ENCODE measurements at regions of chr11 and their contacts with region 1.

Region 1: DNA sequence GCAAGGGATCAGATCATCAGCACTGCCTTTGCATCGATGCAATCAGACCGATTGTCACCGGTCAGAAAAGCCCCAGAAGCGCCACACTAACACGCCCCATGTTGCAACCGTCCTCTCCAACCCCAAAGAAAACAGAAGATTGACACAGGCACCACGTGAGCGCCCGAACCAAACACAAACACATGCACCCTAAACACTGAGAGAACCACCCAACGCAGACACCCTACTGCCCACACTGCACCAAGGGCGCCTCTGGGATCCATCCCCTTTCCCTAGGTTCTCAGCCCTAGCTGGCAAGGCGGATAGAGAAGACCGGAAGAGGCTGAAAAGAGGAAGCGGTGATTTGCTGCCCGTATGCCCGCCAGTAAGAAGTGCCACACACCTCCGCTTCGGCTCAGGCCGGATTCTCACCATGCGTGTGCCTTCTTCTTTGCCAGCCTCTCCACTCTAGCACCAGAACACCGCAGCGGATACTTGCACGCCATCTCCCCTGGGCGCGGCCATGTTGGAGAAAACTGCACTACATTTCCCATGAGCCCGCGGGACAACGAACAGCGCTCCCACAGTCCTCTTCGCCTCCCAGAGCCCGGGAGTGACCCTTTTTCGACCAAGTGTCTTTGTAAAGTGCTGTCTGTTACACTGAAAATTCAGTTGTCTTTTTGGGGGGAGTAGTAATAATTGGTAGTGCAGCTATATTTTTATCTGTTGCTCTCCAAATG is at the start of gene ALKBH8:
- DNase-seq: peak; percentile 71 to 83 (median 72)
- ATAC-seq: peak; percentile 96
- H3K4me3 ChIP-seq: peak within 1 kb of the TSS; percentile 74
- H3K27ac ChIP-seq: peak within 1 kb of the TSS; percentile 86
- H3K4me1 ChIP-seq: peaks cover 9 to 25% of the 10 kb centered on the region in 2 experiments
- H3K27me3 ChIP-seq: no peaks in the 10 kb centered on the region
- CTCF ChIP-seq: no peak
- EP300 ChIP-seq: no peak
- POLR2A ChIP-seq: peak; percentile 76
- RAD21 ChIP-seq: no peak
- polyA plus RNA-seq, gene ALKBH8: 4.3 to 7.5 TPM

Region 2: DNA sequence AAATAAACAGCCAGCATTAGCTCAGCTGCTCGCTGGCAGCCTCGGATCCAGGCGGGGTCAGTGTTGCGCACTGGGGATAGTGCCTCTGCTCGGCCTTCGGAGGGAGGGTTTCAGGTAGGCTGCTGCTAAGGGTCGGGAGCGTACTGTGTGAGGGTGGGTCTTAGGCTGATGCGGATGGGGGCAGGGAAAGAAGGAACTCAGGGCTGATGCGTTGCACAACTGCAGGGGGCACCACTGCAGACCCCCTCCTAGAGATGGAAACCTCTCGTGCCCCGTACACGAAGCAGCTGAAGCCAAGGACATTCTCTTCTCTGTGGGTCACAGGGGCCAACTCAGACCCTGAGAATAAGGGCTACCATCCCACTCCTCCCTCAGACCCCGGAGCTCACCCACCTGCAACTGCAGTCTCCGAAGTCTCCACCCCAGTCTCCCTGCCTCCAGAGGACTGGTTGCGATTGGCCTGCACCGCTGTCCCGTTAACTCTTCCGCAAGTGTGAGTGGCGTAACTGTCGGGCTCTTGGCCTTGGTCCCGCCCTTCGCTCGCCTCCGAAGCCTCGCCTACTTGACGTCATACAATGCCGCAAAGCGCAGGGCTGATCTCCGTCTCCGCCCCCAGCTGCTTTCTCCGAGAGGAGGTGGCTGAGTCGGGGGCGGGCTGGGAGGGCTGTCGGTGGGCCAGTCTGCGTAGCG is 1488.3 kb before region 1 on chr11 and contains the start of gene KBTBD3:
- CTCF ChIA-PET with region 1: no interaction called
- POLR2A ChIA-PET with region 1: no interaction called
- in situ Hi-C with region 1: no loop called
- intact Hi-C with region 1: loop called (anchors 1 kb)
- DNase-seq: peak; percentile 89 to 99 (median 90)
- ATAC-seq: peak; percentile 95
- H3K4me3 ChIP-seq: peak within 1 kb of the TSS; percentile 92
- H3K27ac ChIP-seq: peak within 1 kb of the TSS; percentile 98
- H3K4me1 ChIP-seq: peaks cover 0 to 9% of the 10 kb centered on the region in 2 experiments; a peak in 2 of 5 replicates
- H3K27me3 ChIP-seq: no peaks in the 10 kb centered on the region
- CTCF ChIP-seq: peak; percentile 39 to 67 (median 61); a peak in 5 of 6 replicates
- EP300 ChIP-seq: no peak
- POLR2A ChIP-seq: no peak
- RAD21 ChIP-seq: no peak
- polyA plus RNA-seq, gene KBTBD3: 28.2 to 31.2 TPM

Region 3: GRCh38 chr11:107689317-107690202 is 124.2 kb after region 1 on chr11:
- CTCF ChIA-PET with region 1: interaction called, 26 read pairs
- POLR2A ChIA-PET with region 1: interaction called, 3 read pairs
- in situ Hi-C with region 1: no loop called
- intact Hi-C with region 1: loop called (anchors 1 kb)
- DNase-seq: peak; percentile 33 to 78 (median 46)
- ATAC-seq: peak; percentile 94
- H3K4me3 ChIP-seq: no peak overlapping the region
- H3K27ac ChIP-seq: no peak overlapping the region
- H3K4me1 ChIP-seq: no peaks in the 10 kb centered on the region
- H3K27me3 ChIP-seq: no peaks in the 10 kb centered on the region
- CTCF ChIP-seq: peak; percentile 64 to 86 (median 79)
- EP300 ChIP-seq: no peak
- POLR2A ChIP-seq: no peak
- RAD21 ChIP-seq: peak; percentile 93 to 95

Region 4: GRCh38 chr11:107770551-107770951 is 205.2 kb after region 1 on chr11:
- CTCF ChIA-PET with region 1: interaction called, 4 read pairs
- POLR2A ChIA-PET with region 1: no interaction called
- in situ Hi-C with region 1: no loop called
- intact Hi-C with region 1: loop called (anchors 5 kb)
- DNase-seq: no peak
- ATAC-seq: no peak
- H3K4me3 ChIP-seq: no peak overlapping the region
- H3K27ac ChIP-seq: no peak overlapping the region
- H3K4me1 ChIP-seq: no peaks in the 10 kb centered on the region; a peak in 1 of 5 replicates
- H3K27me3 ChIP-seq: peaks cover 0 to 14% of the 10 kb centered on the region in 2 experiments; a peak in 2 of 5 replicates
- CTCF ChIP-seq: no peak
- EP300 ChIP-seq: no peak
- POLR2A ChIP-seq: no peak
- RAD21 ChIP-seq: no peak

Region 5: DNA sequence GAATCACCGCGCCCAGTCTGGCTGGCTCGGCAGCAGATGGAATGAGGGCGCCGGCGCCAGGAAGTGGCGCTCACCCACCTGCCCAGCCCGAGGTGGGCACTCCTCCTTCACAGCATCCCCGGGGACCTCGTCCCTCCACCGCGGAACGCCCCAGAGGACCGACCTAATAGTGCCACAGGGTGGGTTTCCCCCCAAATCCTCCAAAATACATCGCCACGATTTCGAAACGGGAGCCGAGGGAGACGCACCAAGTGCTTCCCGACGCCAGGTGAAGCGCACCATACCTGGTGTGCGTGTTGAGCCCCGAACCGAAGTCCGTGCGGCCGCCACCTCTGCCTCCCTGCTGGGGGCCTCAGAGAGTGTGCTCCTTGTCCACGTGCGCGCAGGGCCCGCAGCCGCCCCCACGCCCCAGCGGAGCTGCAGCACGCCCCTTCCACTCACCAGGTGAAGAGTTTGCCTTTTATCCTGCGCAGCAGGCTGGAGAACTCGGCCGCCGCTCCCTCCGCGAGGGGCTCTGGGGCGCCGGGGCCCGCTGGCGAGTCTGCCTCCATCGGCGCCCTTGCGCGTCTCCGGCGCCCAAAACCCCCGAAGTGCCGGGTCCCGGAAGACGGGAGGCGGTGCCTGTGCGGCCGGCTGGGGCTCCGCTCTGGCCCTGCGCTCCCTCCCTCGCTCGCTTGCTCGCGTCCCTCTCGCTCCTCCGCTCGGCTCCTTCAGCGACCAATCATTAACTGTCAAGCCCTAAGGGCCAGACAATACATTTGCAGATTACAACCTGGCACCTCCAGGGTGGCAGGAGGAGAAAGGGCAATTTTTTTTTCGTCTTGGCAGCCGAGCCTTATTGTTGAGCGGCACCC is 293.1 kb after region 1 on chr11 and contains the start of gene SLC35F2:
- CTCF ChIA-PET with region 1: no interaction called
- POLR2A ChIA-PET with region 1: interaction called, 5 read pairs
- in situ Hi-C with region 1: no loop called
- intact Hi-C with region 1: loop called (anchors 5 kb)
- DNase-seq: peak; percentile 72 to 86 (median 78)
- ATAC-seq: peak; percentile 92
- H3K4me3 ChIP-seq: peak within 1 kb of the TSS; percentile 77
- H3K27ac ChIP-seq: peak within 1 kb of the TSS; percentile 58
- H3K4me1 ChIP-seq: peaks cover 6 to 17% of the 10 kb centered on the region in 2 experiments; a peak in 3 of 5 replicates
- H3K27me3 ChIP-seq: no peaks in the 10 kb centered on the region; a peak in 1 of 5 replicates
- CTCF ChIP-seq: peak; percentile 4 to 12 (median 9); a peak in 1 of 6 replicates
- EP300 ChIP-seq: 0 out of 2 replicates have a peak, but pooled peaks have one; percentile 5
- POLR2A ChIP-seq: peak; percentile 85
- RAD21 ChIP-seq: no peak
- polyA plus RNA-seq, gene SLC35F2: 28.6 to 38.3 TPM

Region 6: DNA sequence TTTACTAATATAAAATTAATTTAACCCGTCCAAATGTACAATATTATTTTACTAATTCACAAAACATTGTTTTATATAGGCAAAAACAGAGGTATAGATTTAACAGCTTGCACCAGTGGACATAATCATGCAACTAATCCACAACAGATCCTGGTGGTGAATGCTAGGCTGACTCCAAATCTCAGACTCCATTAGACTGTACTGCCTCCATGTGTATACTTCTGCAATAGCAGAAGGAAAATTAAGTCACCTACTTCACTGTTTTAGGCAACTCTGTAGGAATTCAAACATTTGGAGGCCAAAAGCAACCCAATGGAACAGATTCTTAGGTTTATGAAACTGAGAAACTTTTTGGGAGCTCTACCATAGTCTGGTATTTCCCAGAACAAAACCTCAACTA is 332.9 kb after region 1 on chr11:
- CTCF ChIA-PET with region 1: interaction called, 3 read pairs
- POLR2A ChIA-PET with region 1: no interaction called
- in situ Hi-C with region 1: no loop called
- intact Hi-C with region 1: loop called (anchors 5 kb)
- DNase-seq: peak in 3 of 4 experiments; percentile 11 to 42 (median 32)
- ATAC-seq: peak; percentile 95
- H3K4me3 ChIP-seq: no peak overlapping the region
- H3K27ac ChIP-seq: no peak overlapping the region
- H3K4me1 ChIP-seq: no peaks in the 10 kb centered on the region
- H3K27me3 ChIP-seq: peaks cover 9 to 18% of the 10 kb centered on the region in 2 experiments; a peak in 4 of 5 replicates
- CTCF ChIP-seq: peak; percentile 63 to 76 (median 72)
- EP300 ChIP-seq: no peak
- POLR2A ChIP-seq: no peak
- RAD21 ChIP-seq: peak; percentile 57 to 85